Mammary epithelial cell (primary cell): ENCODE measurements at regions of chr9 and their contacts with region 1.

Region 1: DNA sequence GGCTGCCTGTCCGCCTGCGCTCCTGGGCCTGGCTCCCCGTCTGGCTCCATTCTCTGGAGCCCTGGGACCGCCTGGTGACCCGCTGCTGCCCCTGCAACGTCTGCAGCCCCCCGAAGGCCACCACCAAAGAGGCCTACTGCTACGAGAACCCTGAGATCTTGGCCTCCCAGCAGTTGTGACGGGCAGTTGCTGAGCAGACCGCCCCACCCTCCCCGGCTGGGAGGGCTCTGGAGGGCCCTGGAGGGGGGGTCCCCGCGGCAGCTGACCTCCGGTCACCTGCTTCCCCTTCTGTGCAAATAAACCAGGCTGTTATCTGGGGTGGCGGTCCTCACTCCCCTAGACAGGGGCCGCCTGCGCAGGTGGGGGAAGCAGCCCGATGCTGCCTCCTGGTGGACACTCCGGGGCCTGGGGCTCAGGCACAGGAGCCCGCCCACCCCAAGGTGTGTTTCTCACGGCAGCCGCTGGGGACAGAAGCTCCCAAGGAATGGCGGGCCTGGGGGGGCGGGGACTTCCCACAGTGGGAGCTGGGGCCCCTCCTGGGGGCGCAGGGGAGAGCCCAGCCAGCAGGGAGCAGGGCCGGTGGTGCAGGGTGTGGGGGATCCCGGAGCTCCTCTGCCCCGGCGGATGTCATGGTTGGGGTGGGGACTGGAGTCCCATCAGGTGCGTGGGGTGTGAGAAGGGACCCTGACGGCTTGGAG is 4.7 kb upstream of the TUBB4B start:
- DNase-seq: peak; percentile 55
- H3K4me3 ChIP-seq: no peak overlapping the region
- H3K27ac ChIP-seq: no peak overlapping the region
- H3K4me1 ChIP-seq: peaks cover 27% of the 10 kb centered on the region
- H3K27me3 ChIP-seq: no peaks in the 10 kb centered on the region
- CTCF ChIP-seq: peak; percentile 91 to 95

Region 2: DNA sequence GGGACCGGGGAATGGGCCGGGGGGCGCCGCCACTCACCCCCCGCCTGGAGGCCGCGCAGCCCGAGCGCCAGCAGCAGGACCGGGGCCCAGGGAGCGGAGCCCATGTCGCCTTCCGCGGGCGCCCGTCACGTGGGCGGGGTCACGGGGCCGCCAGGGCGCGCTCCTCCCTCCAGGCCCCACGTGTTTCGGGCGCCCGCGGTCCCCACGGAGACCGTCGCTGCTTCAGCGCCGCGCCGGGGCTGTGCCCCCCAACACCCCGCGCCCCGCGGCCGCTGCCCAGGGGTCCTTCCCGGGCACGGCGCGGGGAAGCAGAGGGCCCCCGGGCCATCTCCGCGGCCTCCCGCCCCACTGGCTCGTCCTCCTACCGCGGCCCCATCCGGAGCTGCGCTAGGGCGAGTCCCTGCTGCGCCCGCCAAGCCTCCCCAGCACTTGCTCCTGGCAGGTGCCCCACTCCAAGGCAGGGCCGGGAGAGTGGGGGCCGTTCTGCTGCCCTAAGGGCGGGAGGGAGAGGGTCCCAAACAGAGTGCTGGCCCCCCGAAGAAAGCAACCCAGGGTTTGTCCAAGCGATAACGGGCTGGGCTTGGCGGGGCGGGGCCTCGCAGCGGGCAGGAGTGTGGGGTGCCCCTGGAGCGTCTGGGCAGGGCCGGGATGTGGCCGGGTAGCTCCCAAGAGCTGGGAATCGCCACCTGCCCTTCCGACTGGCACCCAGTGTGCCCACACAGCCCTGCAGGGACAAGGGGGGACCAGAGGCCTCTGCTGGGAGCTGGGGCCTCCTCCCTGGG is 121.6 kb before region 1 on chr9 and contains the start of gene DPP7:
- CTCF ChIA-PET with region 1: interaction called, 4 read pairs
- dilution Hi-C with region 1: no loop called
- in situ Hi-C with region 1: no loop called
- intact Hi-C with region 1: loop called (anchors 1 kb)
- DNase-seq: peak; percentile 30
- H3K4me3 ChIP-seq: peak within 1 kb of the TSS; percentile 56 to 68 (median 58)
- H3K27ac ChIP-seq: no peak within 1 kb of the TSS
- H3K4me1 ChIP-seq: peaks cover 5% of the 10 kb centered on the region
- H3K27me3 ChIP-seq: no peaks in the 10 kb centered on the region
- CTCF ChIP-seq: no peak
- total RNA-seq, gene DPP7: 52.3 to 80.7 TPM

Region 3: GRCh38 chr9:137129456-137130175 is 106.8 kb before region 1 on chr9:
- CTCF ChIA-PET with region 1: interaction called, 8 read pairs
- dilution Hi-C with region 1: no loop called
- in situ Hi-C with region 1: loop called in 1 of 2 experiments (anchors 10 kb)
- intact Hi-C with region 1: no loop called
- DNase-seq: peak; percentile 89
- H3K4me3 ChIP-seq: peak overlapping the region; percentile 64 to 83 (median 81)
- H3K27ac ChIP-seq: peak overlapping the region; percentile 53
- H3K4me1 ChIP-seq: peaks cover 14% of the 10 kb centered on the region
- H3K27me3 ChIP-seq: no peaks in the 10 kb centered on the region
- CTCF ChIP-seq: no peak

Region 4: GRCh38 chr9:137188490-137189296 is 47.7 kb before region 1 on chr9 and contains the starts of genes ANAPC2 and SSNA1:
- CTCF ChIA-PET with region 1: interaction called, 5 read pairs
- dilution Hi-C with region 1: no loop called
- in situ Hi-C with region 1: no loop called
- intact Hi-C with region 1: loop called (anchors 2 kb)
- DNase-seq: peak; percentile 91
- H3K4me3 ChIP-seq: peak within 1 kb of the TSS; percentile 87 to 98 (median 92)
- H3K27ac ChIP-seq: peak within 1 kb of the TSS; percentile 71
- H3K4me1 ChIP-seq: peaks cover 28% of the 10 kb centered on the region
- H3K27me3 ChIP-seq: no peaks in the 10 kb centered on the region
- CTCF ChIP-seq: peak in 1 of 2 donors; percentile 60
- total RNA-seq, gene ANAPC2: 15.5 to 45.3 TPM
- total RNA-seq, gene SSNA1: 36.2 to 70.2 TPM

Region 5: GRCh38 chr9:137277329-137278041 is 41.1 kb after region 1 on chr9 and contains the start of gene TOR4A:
- CTCF ChIA-PET with region 1: no interaction called
- dilution Hi-C with region 1: no loop called
- in situ Hi-C with region 1: no loop called
- intact Hi-C with region 1: no loop called
- DNase-seq: no peak
- H3K4me3 ChIP-seq: no peak within 1 kb of the TSS
- H3K27ac ChIP-seq: no peak within 1 kb of the TSS
- H3K4me1 ChIP-seq: peaks cover 24% of the 10 kb centered on the region
- H3K27me3 ChIP-seq: peaks cover 5% of the 10 kb centered on the region
- CTCF ChIP-seq: no peak
- total RNA-seq, gene TOR4A: 0.73 to 1.5 TPM